Caco-2 (cell line): ENCODE measurements at regions of chr17 and their contacts with region 1.

Region 1: DNA sequence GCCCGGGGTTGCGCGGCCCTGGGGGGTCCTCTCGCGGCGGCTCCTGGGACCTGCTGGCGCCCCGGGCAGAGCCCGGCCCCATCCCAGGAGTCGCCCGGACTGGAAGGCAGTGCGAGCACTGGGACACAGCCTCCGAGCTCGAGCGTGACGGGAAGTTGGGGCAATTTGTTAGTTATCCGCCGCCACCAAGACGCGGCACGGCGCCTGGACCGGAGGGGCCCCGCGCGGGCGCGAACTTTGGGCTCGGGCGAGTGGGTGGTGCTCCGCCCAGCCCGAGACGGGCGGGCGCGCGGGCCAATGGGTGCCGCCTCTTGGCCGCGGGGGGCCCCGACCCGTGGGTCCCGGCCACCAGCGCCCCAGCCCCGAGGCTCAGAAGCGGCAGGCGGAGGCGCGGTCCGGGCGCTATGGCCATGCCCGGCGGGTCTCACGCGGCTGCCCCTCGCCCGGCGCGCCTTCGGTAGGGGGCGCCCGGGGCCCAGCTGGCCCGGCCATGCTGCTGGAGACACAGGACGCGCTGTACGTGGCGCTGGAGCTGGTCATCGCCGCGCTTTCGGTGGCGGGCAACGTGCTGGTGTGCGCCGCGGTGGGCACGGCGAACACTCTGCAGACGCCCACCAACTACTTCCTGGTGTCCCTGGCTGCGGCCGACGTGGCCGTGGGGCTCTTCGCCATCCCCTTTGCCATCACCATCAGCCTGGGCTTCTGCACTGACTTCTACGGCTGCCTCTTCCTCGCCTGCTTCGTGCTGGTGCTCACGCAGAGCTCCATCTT is at the start of gene ADORA2B:
- DNase-seq: peak; percentile 53 to 73
- H3K4me3 ChIP-seq: peak within 1 kb of the TSS; percentile 67
- H3K4me3 Mint-ChIP-seq: peak within 1 kb of the TSS; percentile 66
- H3K27ac Mint-ChIP-seq: no peak within 1 kb of the TSS
- H3K4me1 ChIP-seq: no peaks in the 10 kb centered on the region
- H3K4me1 Mint-ChIP-seq: no peaks in the 10 kb centered on the region
- H3K27me3 ChIP-seq: no peaks in the 10 kb centered on the region
- H3K27me3 Mint-ChIP-seq: no peaks in the 10 kb centered on the region
- CTCF ChIP-seq: peak; percentile 43 to 46
- total RNA-seq, gene ADORA2B: 1.5 and 2.5 TPM in 2 replicates

Region 2: DNA sequence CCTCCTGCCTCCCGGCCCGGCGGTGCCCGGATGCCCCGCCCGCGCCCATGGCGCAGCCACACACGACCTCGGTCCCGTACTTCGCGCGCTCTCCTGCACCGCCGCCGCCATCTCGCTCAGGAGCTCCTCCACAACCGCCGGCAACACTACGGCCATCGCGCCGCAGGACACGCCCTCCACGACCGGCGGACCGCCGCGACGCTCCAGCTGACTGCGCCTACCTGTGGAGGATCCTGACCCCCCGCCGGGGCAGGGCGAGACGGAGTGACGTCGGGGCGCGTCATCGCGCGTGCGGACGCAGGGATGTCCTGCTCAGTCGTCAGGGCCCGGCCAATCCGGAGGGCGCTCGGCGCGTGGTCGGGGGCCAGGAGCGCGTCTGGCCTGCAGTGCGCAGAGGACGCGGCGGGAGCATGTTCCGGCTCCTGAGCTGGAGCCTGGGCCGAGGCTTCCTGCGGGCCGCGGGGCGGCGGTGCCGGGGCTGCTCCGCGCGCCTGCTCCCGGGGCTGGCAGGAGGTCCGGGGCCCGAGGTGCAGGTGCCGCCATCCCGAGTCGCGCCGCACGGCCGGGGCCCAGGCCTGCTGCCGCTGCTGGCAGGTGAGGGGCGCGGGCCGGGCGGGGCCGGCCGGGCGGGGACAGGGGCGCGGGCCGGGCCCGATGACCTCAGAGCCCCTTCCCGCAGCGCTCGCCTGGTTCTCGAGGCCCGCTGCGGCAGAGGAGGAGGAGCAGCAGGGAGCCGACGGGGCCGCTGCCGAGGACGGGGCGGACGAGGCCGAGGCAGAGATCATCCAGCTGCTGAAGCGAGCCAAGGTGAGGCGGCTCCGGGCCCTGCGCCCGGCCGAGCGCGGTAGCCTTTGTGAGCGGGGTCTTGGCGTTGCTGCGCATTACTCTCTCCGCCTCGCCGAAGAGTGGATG is 54.8 kb after region 1 on chr17 and contains the starts of genes TTC19 and ZSWIM7:
- CTCF ChIA-PET with region 1: interaction called, 19 read pairs
- POLR2A ChIA-PET with region 1: interaction called, 5 read pairs
- intact Hi-C with region 1: loop called (anchors 1 kb)
- DNase-seq: peak; percentile 94
- H3K4me3 ChIP-seq: peak within 1 kb of the TSS; percentile 69
- H3K4me3 Mint-ChIP-seq: peak within 1 kb of the TSS; percentile 82
- H3K27ac Mint-ChIP-seq: peak within 1 kb of the TSS; percentile 69
- H3K4me1 ChIP-seq: no peaks in the 10 kb centered on the region
- H3K4me1 Mint-ChIP-seq: peaks cover 15% of the 10 kb centered on the region
- H3K27me3 ChIP-seq: no peaks in the 10 kb centered on the region
- H3K27me3 Mint-ChIP-seq: no peaks in the 10 kb centered on the region
- CTCF ChIP-seq: no peak
- total RNA-seq, gene TTC19: 20.2 and 21.9 TPM in 2 replicates
- total RNA-seq, gene ZSWIM7: 10.4 and 13.8 TPM in 2 replicates